Activated CD8-positive, alpha-beta memory T cell treated with anti-CD3 and anti-CD28 coated beads, Interleukin-2, amount 10 ng/mL, durations not matched to agents 7 days and 5 days (primary cell): ENCODE measurements at regions of chr19 and their contacts with region 1.

Region 1: GRCh38 chr19:12139885-12140547 is at the start of gene ZNF20:
- DNase-seq: peak; percentile 95
- ATAC-seq: peak; percentile 97
- H3K4me3 Mint-ChIP-seq: peak within 1 kb of the TSS; percentile 91
- H3K27ac Mint-ChIP-seq: peak within 1 kb of the TSS; percentile 84
- H3K4me1 Mint-ChIP-seq: peaks cover 28% of the 10 kb centered on the region
- H3K27me3 Mint-ChIP-seq: no peaks in the 10 kb centered on the region
- total RNA-seq, gene ZNF20: 3.7 to 5.2 TPM

Region 2: DNA sequence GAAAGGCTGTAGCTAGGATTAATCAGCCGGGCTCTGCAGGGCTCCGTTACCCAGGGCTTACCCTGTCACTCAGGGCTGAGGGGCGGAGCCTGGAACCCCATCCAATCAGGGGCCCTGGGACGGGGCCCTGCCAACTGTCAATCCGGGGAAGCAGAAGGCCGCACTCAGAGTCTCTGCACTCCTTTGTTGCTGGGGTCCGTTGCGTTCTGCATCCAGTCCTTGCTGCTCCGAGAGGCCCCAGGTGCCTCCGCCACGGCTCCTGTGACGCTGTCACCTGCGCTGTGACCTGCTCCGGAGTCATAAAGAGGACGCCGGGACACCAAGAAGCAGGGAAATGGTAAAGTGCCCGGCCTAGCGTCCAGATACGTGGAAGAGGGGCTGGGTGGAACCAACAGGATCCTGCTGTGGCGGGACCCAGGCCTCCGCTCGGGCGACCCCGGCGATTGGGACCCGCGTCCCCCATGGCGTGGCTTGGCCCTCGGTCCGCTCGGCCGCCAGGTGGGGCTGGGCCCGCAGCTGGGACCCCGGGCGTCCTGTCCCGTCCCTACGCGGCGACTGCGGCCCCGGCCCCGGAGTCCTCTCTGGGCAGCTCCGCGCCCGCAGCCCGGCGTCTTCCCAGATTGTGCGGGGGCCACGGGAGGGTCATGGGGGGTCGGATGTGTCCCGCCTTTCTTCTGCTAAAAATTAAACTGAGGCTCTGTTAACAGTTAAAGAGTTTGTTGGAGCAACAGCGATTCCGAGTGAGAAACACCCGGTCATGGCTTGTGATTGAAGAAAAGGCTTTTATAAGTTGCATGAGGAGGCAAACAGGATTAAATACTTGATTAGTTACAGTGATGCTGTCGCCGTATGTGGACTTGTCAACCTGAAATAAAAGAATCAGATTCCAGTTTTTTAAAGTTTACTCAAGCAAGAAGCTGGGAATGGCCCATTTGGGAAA is 341.4 kb before region 1 on chr19 and contains the start of gene ZNF491:
- CTCF ChIA-PET with region 1: interaction called, 27 read pairs
- DNase-seq: peak; percentile 92
- ATAC-seq: peak; percentile 99
- H3K4me3 Mint-ChIP-seq: peak within 1 kb of the TSS; percentile 80
- H3K27ac Mint-ChIP-seq: peak within 1 kb of the TSS; percentile 78
- H3K4me1 Mint-ChIP-seq: peaks cover 14% of the 10 kb centered on the region
- H3K27me3 Mint-ChIP-seq: no peaks in the 10 kb centered on the region
- total RNA-seq, gene ZNF491: 0.96 to 1.7 TPM

Region 3: DNA sequence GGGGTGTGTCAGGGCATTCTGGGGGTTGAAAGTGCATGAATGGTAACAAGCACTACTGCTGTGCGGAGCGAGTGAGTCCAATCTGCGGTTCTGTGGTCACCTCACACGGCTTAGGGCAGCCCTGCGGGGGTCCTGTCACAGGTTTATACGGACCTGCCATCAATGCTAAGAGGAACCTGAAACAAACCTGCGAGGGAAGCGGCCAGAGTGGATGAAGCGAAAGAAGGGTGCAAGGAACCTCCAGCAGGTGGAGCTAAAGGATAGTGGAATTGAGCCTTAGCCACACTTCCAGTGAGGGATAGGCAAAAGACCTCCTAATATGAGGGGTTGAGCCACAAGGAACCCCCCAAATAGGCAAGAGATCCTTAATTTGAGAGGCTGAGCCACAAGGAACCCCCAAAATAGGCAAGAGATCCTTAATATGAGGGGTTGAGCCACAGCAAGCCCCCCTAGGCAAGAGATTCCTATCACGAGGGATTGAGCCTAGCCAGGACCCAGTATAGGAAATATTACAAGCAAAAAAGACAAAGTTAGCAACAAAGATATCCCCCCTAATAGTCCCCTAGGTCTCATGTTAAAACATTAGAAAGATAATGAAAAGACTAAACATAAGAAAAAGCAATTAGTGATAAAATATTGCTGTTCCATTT is 258.7 kb before region 1 on chr19:
- CTCF ChIA-PET with region 1: interaction called, 18 read pairs
- DNase-seq: peak; percentile 74
- ATAC-seq: peak; percentile 80
- H3K4me3 Mint-ChIP-seq: no peak overlapping the region
- H3K27ac Mint-ChIP-seq: no peak overlapping the region
- H3K4me1 Mint-ChIP-seq: peaks cover 2% of the 10 kb centered on the region
- H3K27me3 Mint-ChIP-seq: peaks cover 4% of the 10 kb centered on the region

Region 4: DNA sequence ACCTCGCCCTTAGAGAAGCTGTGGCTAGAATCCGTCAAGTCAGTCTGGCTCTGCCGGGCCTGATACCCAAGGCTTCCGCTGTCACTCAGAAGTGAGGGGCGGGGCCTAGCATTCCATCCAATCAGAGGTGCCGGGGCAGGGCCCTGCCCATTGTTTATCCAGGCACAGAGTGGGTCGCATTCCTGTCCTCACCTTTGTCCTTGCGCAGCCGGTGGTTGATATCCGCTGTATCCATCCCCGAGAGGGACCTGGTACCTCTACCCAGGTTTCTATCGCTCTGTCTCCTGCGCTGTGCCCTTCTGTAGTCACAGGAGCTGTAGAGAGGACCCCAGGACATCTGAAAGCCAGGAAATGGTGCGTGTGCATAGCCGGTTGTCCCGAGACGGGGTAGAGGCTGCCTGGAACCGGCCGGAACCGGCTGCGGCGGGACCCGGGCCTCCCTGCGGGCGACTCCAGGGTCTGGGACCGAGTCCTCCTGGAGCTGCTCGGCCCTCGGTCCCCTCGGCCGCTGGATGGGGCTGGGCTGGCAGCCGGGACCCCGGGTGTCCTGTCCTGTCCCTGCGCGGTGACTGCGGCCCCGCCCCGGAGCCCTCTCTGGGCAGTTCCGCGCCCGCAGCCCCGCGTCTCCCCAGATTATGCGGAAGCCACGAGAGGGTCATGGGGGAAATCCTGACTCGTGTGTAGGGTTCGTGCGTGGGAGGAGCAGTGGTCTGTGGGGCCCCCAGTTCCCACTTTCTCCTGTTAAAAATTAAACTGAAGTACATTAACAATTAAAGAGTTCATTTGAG is 175.0 kb before region 1 on chr19 and contains the start of gene ZNF763:
- CTCF ChIA-PET with region 1: interaction called, 29 read pairs
- DNase-seq: peak; percentile 95
- ATAC-seq: peak; percentile 97
- H3K4me3 Mint-ChIP-seq: peak within 1 kb of the TSS; percentile 86
- H3K27ac Mint-ChIP-seq: peak within 1 kb of the TSS; percentile 90
- H3K4me1 Mint-ChIP-seq: peaks cover 22% of the 10 kb centered on the region
- H3K27me3 Mint-ChIP-seq: no peaks in the 10 kb centered on the region
- total RNA-seq, gene ZNF763: 0.85 to 0.98 TPM

Region 5: DNA sequence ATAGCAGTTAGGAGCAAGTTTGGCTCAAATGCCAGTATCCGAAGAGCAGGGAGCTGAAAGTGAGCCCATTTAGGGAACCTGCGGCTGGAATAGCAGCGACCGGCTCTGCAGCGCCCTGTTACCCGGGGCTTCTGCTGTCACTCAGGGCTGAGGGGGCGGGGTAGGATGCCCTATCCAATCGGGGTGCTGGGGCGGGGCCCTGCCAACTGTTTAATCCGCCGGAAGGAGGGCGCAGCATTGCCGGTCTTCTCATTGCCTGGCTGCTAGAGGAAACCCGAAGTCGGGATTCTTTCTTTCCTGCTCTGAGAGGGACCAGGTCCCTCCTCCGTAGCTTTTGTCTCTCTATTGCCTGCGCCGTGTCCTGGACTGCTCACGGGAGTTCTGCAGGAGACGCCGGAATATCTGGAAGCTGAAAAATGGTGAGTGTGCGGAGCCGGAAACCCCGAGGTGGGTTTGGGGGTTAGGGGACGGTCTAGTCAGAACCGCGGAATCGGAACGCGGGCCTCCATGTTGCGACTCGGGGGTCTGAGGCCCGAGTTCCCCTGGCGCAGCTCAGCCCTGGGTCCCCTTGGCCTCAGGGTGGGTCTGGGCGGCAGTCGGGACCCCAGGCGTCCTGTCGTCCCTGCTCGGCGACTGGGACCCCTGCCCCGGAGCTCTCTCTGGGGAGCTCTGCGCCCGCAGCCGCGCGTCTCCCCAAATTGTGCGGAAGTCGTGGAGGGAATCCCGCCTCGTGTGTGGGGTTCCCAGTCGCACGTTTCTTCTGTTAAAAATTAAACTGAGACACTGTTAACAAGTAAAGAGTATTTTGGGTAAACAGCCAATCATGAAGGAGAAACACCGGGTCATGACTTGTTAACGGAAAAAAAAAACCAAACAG is 152.4 kb before region 1 on chr19:
- CTCF ChIA-PET with region 1: interaction called, 26 read pairs
- DNase-seq: peak; percentile 97
- ATAC-seq: peak; percentile 96
- H3K4me3 Mint-ChIP-seq: peak overlapping the region; percentile 99
- H3K27ac Mint-ChIP-seq: peak overlapping the region; percentile 98
- H3K4me1 Mint-ChIP-seq: peaks cover 18% of the 10 kb centered on the region
- H3K27me3 Mint-ChIP-seq: no peaks in the 10 kb centered on the region

Region 6: GRCh38 chr19:12064590-12065538 is 75.2 kb before region 1 on chr19 and contains the start of gene ZNF844:
- CTCF ChIA-PET with region 1: interaction called, 32 read pairs
- DNase-seq: peak; percentile 76
- ATAC-seq: peak; percentile 84
- H3K4me3 Mint-ChIP-seq: peak within 1 kb of the TSS; percentile 72
- H3K27ac Mint-ChIP-seq: peak within 1 kb of the TSS; percentile 76
- H3K4me1 Mint-ChIP-seq: peaks cover 8% of the 10 kb centered on the region
- H3K27me3 Mint-ChIP-seq: no peaks in the 10 kb centered on the region
- total RNA-seq, gene ZNF844: 1.3 to 1.5 TPM

Region 7: GRCh38 chr19:12092065-12092867 is 47.8 kb before region 1 on chr19:
- CTCF ChIA-PET with region 1: interaction called, 48 read pairs
- DNase-seq: peak; percentile 84
- ATAC-seq: peak; percentile 94
- H3K4me3 Mint-ChIP-seq: peak overlapping the region; percentile 78
- H3K27ac Mint-ChIP-seq: peak overlapping the region; percentile 83
- H3K4me1 Mint-ChIP-seq: peaks cover 11% of the 10 kb centered on the region
- H3K27me3 Mint-ChIP-seq: no peaks in the 10 kb centered on the region